CD4-positive, alpha-beta T cell (primary cell): ENCODE measurements at regions of chr2 and their contacts with region 1.

Region 1: GRCh38 chr2:238462782-238463396 is 36.2 kb downstream of the ASB1 start:
- DNase-seq: peak in 3 of 14 experiments; percentile 64 to 69 (median 67)
- ATAC-seq: peak; percentile 70
- H3K4me3 ChIP-seq: no peak overlapping the region
- H3K4me3 Mint-ChIP-seq: no peak overlapping the region
- H3K27ac ChIP-seq: no peak overlapping the region
- H3K27ac Mint-ChIP-seq: no peak overlapping the region
- H3K4me1 ChIP-seq: no peaks in the 10 kb centered on the region
- H3K4me1 Mint-ChIP-seq: peaks cover 4% of the 10 kb centered on the region
- H3K27me3 ChIP-seq: no peaks in the 10 kb centered on the region
- H3K27me3 Mint-ChIP-seq: no peaks in the 10 kb centered on the region
- CTCF ChIP-seq: peak; percentile 85

Region 2: DNA sequence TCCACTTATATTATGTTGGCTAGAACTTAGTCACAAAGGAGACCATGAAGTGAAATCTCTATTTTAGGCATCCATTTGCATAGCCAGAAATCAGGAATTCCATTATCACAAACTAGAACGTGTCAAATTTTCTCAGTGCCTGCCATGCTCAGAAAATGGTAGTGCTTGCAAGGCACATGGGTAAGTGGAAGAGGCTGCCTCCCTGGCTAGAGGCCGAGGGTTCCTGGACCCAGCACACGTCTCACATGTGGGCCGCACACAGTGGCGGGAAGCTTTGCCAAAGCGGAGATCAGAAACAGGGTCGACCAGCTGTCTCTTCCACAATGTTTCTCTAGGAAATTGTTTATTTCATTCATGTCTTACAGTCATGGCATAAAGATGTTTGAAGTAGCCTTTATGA is 100.3 kb before region 1 on chr2:
- CTCF ChIA-PET with region 1: no interaction called
- POLR2A ChIA-PET with region 1: no interaction called
- intact Hi-C with region 1: loop called (anchors 1 kb)
- DNase-seq: no peak
- ATAC-seq: no peak
- H3K4me3 ChIP-seq: no peak overlapping the region
- H3K4me3 Mint-ChIP-seq: no peak overlapping the region
- H3K27ac ChIP-seq: no peak overlapping the region
- H3K27ac Mint-ChIP-seq: no peak overlapping the region
- H3K4me1 ChIP-seq: no peaks in the 10 kb centered on the region
- H3K4me1 Mint-ChIP-seq: no peaks in the 10 kb centered on the region
- H3K27me3 ChIP-seq: no peaks in the 10 kb centered on the region
- H3K27me3 Mint-ChIP-seq: no peaks in the 10 kb centered on the region
- CTCF ChIP-seq: no peak

Region 3: DNA sequence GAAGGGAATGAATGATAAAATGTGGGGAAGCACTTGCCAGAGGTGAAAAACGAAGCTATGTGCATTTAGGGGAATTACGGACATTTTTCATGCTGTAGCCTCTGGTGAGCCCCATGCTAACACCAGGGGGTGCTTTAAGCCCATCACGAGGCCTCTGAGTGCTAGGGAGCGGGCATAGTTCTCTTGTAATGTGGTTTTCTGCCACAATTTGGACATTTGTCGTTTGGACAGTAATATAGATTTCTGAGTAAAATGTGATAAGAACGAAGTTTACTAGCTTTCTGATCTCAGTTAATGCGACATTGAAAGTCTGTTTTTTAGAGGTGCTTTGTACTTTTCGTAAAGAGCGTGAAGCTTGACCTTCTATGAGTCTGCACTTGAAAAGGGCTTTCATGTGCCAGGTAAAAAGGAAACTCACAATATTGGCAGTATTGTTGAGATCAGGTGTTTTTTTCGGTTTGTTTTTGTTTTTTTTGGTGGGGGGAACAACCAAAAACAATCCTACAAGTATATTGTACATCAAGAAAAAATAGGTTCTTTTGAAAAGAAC is 92.0 kb before region 1 on chr2:
- CTCF ChIA-PET with region 1: interaction called, 6 read pairs
- POLR2A ChIA-PET with region 1: interaction called, 3 read pairs
- intact Hi-C with region 1: loop called (anchors 1 kb)
- DNase-seq: peak in 12 of 14 experiments; percentile 18 to 75 (median 41)
- ATAC-seq: peak; percentile 68
- H3K4me3 ChIP-seq: no peak overlapping the region
- H3K4me3 Mint-ChIP-seq: no peak overlapping the region
- H3K27ac ChIP-seq: no peak overlapping the region
- H3K27ac Mint-ChIP-seq: no peak overlapping the region
- H3K4me1 ChIP-seq: no peaks in the 10 kb centered on the region
- H3K4me1 Mint-ChIP-seq: peaks cover 8% of the 10 kb centered on the region
- H3K27me3 ChIP-seq: no peaks in the 10 kb centered on the region
- H3K27me3 Mint-ChIP-seq: no peaks in the 10 kb centered on the region
- CTCF ChIP-seq: peak; percentile 70